ENCODE measurements at regions of chr5 and their contacts with region 1.

Region 1: GRCh38 chr5:91434348-91434747 is 51.2 kb upstream of the ARRDC3 start:
- DNase-seq: peak; percentile 10
- H3K4me3 Mint-ChIP-seq: no peak overlapping the region
- H3K27ac Mint-ChIP-seq: peak overlapping the region; percentile 9
- H3K4me1 Mint-ChIP-seq: peaks cover 31% of the 10 kb centered on the region
- H3K27me3 Mint-ChIP-seq: no peaks in the 10 kb centered on the region

Region 2: GRCh38 chr5:89572696-89573095 is 1861.7 kb before region 1 on chr5:
- CTCF ChIA-PET with region 1: no interaction called
- intact Hi-C with region 1: no loop called
- DNase-seq: no peak
- H3K4me3 Mint-ChIP-seq: no peak overlapping the region
- H3K27ac Mint-ChIP-seq: no peak overlapping the region
- H3K4me1 Mint-ChIP-seq: no peaks in the 10 kb centered on the region
- H3K27me3 Mint-ChIP-seq: no peaks in the 10 kb centered on the region

Region 3: GRCh38 chr5:91136271-91136670 is 298.1 kb before region 1 on chr5:
- CTCF ChIA-PET with region 1: no interaction called
- intact Hi-C with region 1: no loop called
- DNase-seq: no peak
- H3K4me3 Mint-ChIP-seq: no peak overlapping the region
- H3K27ac Mint-ChIP-seq: no peak overlapping the region
- H3K4me1 Mint-ChIP-seq: no peaks in the 10 kb centered on the region
- H3K27me3 Mint-ChIP-seq: peaks cover 6% of the 10 kb centered on the region

Region 4: GRCh38 chr5:91280362-91281269 is 153.7 kb before region 1 on chr5:
- CTCF ChIA-PET with region 1: no interaction called
- intact Hi-C with region 1: no loop called
- DNase-seq: peak; percentile 94
- H3K4me3 Mint-ChIP-seq: peak overlapping the region; percentile 73
- H3K27ac Mint-ChIP-seq: peak overlapping the region; percentile 87
- H3K4me1 Mint-ChIP-seq: peaks cover 42% of the 10 kb centered on the region
- H3K27me3 Mint-ChIP-seq: no peaks in the 10 kb centered on the region

Region 5: GRCh38 chr5:91491229-91491628 is 56.9 kb after region 1 on chr5:
- CTCF ChIA-PET with region 1: interaction called, 5 read pairs
- intact Hi-C with region 1: loop called (anchors 2 kb)
- DNase-seq: no peak
- H3K4me3 Mint-ChIP-seq: no peak overlapping the region
- H3K27ac Mint-ChIP-seq: no peak overlapping the region
- H3K4me1 Mint-ChIP-seq: peaks cover 18% of the 10 kb centered on the region
- H3K27me3 Mint-ChIP-seq: no peaks in the 10 kb centered on the region

Region 6: GRCh38 chr5:91541696-91542095 is 107.3 kb after region 1 on chr5:
- CTCF ChIA-PET with region 1: no interaction called
- intact Hi-C with region 1: no loop called
- DNase-seq: no peak
- H3K4me3 Mint-ChIP-seq: no peak overlapping the region
- H3K27ac Mint-ChIP-seq: no peak overlapping the region
- H3K4me1 Mint-ChIP-seq: peaks cover 2% of the 10 kb centered on the region
- H3K27me3 Mint-ChIP-seq: peaks cover 3% of the 10 kb centered on the region

Measured in activated naive CD4-positive, alpha-beta T cell treated with anti-CD3 and anti-CD28 coated beads for 36 hours (primary cell).